Activated CD8-positive, alpha-beta memory T cell treated with anti-CD3 and anti-CD28 coated beads, Interleukin-2, amount 10 ng/mL, durations not matched to agents 7 days and 5 days (primary cell): ENCODE measurements at regions of chr1 and their contacts with region 1.

Region 1: DNA sequence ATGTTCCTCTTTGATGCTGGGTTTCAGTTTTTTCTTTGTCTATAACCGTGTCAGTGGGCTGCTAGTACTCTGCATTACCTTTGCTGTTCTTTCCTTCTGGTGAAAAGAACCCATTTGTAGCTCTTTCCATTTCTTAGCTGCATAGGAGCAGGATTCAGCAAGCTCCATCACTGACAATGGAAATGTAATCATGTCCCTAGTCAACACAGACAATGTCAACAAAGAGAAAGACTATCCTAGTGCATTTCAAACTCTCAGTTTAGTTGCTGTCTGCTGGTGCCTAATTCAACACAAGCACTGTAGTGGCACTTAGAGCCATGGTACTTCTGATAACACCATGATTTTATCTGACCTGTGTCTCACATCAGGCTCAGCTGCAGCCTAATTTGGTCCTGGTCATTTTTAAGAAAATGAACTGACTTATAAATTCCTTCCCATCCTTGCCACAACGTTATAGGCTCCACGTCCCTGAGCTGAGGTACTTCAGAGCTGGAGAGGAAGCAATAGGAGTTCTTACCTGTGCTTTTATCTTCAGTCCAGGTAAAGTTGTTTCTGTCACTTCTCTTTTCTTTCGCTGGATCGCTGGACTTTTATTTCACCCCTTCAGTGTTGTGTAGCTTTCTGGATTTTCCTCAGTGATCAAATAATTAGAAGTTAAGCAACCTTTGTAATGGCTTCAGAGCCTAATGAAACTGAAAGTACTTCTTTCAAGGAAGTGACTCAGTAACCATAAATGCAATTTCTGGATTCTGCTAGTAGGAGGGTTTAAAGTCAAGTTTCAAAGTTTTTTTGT is at the start of gene GBP3:
- DNase-seq: peak; percentile 49
- ATAC-seq: peak; percentile 83
- H3K4me3 Mint-ChIP-seq: peak within 1 kb of the TSS; percentile 87
- H3K27ac Mint-ChIP-seq: peak within 1 kb of the TSS; percentile 85
- H3K4me1 Mint-ChIP-seq: peaks cover 40% of the 10 kb centered on the region
- H3K27me3 Mint-ChIP-seq: no peaks in the 10 kb centered on the region
- total RNA-seq, gene GBP3: 32.0 to 38.6 TPM

Region 2: GRCh38 chr1:88640060-88640459 is 382.3 kb before region 1 on chr1:
- CTCF ChIA-PET with region 1: no interaction called
- DNase-seq: no peak
- ATAC-seq: no peak
- H3K4me3 Mint-ChIP-seq: no peak overlapping the region
- H3K27ac Mint-ChIP-seq: no peak overlapping the region
- H3K4me1 Mint-ChIP-seq: no peaks in the 10 kb centered on the region
- H3K27me3 Mint-ChIP-seq: peaks cover 11% of the 10 kb centered on the region

Region 3: GRCh38 chr1:89041119-89041641 is 18.8 kb after region 1 on chr1:
- CTCF ChIA-PET with region 1: interaction called, 10 read pairs
- DNase-seq: no peak
- ATAC-seq: peak; percentile 95
- H3K4me3 Mint-ChIP-seq: peak overlapping the region; percentile 8
- H3K27ac Mint-ChIP-seq: peak overlapping the region; percentile 44
- H3K4me1 Mint-ChIP-seq: peaks cover 21% of the 10 kb centered on the region
- H3K27me3 Mint-ChIP-seq: peaks cover 13% of the 10 kb centered on the region

Region 4: GRCh38 chr1:89065079-89065868 is 42.9 kb after region 1 on chr1 and contains the start of gene GBP1:
- CTCF ChIA-PET with region 1: interaction called, 10 read pairs
- DNase-seq: no peak
- ATAC-seq: peak; percentile 83
- H3K4me3 Mint-ChIP-seq: peak within 1 kb of the TSS; percentile 91
- H3K27ac Mint-ChIP-seq: peak within 1 kb of the TSS; percentile 93
- H3K4me1 Mint-ChIP-seq: peaks cover 53% of the 10 kb centered on the region
- H3K27me3 Mint-ChIP-seq: no peaks in the 10 kb centered on the region
- total RNA-seq, gene GBP1: 106 to 150 TPM

Region 5: DNA sequence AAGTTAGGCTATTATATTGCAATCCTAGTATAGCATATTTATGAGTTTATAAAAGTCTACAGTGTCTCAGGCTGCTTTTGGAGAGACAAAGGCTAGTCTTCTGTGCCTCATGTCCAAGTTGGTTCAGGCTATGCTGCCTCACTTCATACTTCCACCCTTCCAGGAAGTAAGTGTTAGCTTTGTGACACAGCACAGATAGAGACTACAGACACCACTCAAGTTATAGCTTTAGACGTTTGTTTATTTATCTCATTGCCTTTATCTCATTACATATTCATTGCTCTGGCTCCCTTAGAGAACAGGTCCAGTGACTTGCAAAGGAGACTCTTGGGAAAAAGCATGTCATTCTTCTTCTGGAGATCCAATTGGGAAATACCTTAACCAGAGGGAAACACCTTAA is 199.0 kb after region 1 on chr1:
- CTCF ChIA-PET with region 1: no interaction called
- DNase-seq: no peak
- ATAC-seq: no peak
- H3K4me3 Mint-ChIP-seq: no peak overlapping the region
- H3K27ac Mint-ChIP-seq: no peak overlapping the region
- H3K4me1 Mint-ChIP-seq: no peaks in the 10 kb centered on the region
- H3K27me3 Mint-ChIP-seq: no peaks in the 10 kb centered on the region